Activated CD4-positive, alpha-beta memory T cell treated with anti-CD3 and anti-CD28 coated beads, Interleukin-2, amount 10 ng/mL, durations not matched to agents 7 days and 5 days (primary cell): ENCODE measurements at regions of chr12 and their contacts with region 1.

Region 1: DNA sequence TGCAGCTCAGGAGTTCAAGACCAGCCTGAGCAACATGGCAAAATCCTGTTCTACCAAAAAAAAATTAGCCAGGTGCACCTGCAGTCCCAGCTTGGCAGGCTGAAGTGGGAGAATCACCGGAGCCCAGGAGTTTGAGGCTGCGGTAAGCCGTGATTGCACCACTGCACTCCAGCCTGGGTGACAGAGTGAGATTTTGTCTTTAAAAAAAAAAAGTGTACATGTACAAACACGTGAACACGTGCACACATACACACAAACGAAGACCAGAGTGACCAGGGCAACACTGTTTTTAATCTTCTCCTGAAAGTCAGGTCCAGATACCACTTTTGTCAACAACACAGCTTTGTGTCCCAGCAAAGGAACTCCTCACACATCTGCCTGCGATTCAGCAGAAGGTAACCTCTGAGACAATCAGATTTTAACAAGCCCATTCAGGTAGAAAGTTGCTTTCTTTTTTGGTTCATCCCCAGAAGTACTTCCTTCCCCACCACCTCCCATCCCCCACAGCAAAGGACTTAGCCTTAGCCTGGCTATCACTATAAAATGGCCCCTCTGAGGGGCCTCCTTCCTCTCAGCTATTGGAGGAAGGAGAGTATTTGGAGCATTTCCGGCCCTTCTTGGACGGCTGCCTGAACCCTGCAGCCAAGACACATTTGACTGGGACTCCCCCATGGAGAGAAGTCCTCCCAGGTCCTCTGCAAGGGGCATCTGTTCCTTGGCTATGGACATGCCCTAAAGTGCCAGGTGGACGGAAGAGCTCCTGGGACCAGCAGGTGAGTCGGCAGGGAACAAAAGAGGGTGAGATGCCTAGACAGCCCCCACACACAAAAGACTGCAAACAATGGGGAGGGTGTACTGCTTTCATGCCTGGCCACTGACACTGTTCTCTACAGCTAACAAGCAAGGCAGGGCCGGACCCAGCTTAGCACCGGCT is 9.8 kb downstream of the CTDSP2 start:
- DNase-seq: peak; percentile 43
- H3K4me3 Mint-ChIP-seq: peak overlapping the region; percentile 21
- H3K27ac Mint-ChIP-seq: peak overlapping the region; percentile 79
- H3K4me1 Mint-ChIP-seq: peaks cover 86% of the 10 kb centered on the region
- H3K27me3 Mint-ChIP-seq: no peaks in the 10 kb centered on the region

Region 2: GRCh38 chr12:57816855-57817151 is 19.9 kb before region 1 on chr12:
- CTCF ChIA-PET with region 1: interaction called, 11 read pairs
- POLR2A ChIA-PET with region 1: no interaction called
- DNase-seq: no peak
- H3K4me3 Mint-ChIP-seq: no peak overlapping the region
- H3K27ac Mint-ChIP-seq: no peak overlapping the region
- H3K4me1 Mint-ChIP-seq: peaks cover 4% of the 10 kb centered on the region
- H3K27me3 Mint-ChIP-seq: no peaks in the 10 kb centered on the region

Region 3: DNA sequence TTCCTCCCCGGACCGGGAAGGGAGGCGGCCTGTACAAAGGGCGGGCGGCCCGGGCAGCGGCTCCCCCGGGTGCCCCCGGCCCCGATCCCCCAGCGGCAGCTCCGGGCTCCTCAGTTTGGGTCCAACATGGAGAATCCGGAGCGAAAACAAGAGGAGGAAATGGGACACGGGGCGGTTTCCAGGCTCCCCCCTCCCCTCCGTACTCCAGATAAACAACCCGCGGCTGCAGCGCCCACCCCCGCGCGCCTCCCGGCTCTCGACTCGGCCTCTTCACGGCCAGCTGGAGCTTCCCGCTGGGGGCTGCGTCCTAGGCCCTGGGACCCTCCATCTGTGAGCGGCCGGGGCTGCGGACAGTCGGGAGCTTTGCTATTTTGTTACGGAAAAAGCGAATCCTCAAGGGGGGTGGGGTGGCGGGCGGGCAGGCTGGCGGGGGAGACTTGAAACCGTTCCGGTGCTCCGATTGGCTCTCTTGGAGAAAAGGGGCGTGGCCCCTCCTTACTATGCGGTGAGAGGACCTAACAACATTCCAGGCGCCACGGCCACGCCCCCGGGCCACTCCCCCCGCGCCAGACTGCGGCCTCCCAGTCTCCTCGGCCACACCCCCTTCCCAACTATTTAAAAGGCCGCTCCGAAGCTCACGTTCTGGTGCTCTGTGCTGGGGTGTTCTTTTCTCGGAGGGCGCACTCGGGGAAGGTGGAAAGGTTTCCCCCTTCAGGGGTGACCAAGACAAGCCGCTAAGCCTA is 10.0 kb after region 1 on chr12 and contains the start of gene CTDSP2:
- CTCF ChIA-PET with region 1: interaction called, 23 read pairs
- POLR2A ChIA-PET with region 1: interaction called, 54 read pairs
- DNase-seq: peak; percentile 89
- H3K4me3 Mint-ChIP-seq: peak within 1 kb of the TSS; percentile 80
- H3K27ac Mint-ChIP-seq: peak within 1 kb of the TSS; percentile 64
- H3K4me1 Mint-ChIP-seq: peaks cover 33% of the 10 kb centered on the region
- H3K27me3 Mint-ChIP-seq: peaks cover 24% of the 10 kb centered on the region
- total RNA-seq, gene CTDSP2: 137 to 141 TPM

Region 4: DNA sequence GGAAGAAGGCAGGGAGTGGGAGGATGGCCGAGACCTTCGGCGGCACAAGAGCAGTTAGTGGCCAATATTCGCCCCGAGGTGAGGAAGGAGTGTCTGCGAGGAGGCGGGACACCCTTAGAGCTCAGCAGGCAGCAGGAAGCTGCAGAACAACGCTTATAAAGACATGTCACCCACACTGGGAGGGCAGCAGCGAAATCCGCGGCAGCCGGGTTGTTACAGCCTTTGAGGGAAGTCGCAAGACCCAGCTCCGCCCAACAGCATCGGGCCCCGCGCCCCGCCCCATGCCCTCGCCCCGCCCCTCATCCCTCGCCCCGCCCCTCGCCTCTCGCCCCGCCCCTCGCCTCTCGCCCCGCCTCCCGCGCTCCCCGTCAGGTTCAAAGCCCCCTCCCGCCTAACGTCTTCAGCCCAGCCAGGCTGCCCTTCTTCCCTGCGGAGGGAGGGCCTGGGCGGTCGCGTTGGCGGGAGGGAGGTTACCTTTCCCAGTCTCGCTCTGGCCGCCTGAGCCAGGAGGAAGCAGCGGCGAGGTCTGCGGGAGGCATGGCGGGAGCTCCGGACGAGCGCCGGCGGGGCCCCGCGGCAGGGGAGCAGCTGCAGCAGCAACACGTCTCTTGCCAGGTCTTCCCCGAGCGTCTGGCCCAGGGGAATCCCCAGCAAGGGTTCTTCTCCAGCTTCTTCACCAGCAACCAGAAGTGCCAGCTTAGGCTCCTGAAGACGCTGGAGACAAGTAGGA is 104.6 kb after region 1 on chr12 and contains the start of gene ATP23:
- CTCF ChIA-PET with region 1: no interaction called
- POLR2A ChIA-PET with region 1: interaction called, 14 read pairs
- DNase-seq: peak; percentile 93
- H3K4me3 Mint-ChIP-seq: peak within 1 kb of the TSS; percentile 84
- H3K27ac Mint-ChIP-seq: peak within 1 kb of the TSS; percentile 98
- H3K4me1 Mint-ChIP-seq: peaks cover 55% of the 10 kb centered on the region
- H3K27me3 Mint-ChIP-seq: no peaks in the 10 kb centered on the region
- total RNA-seq, gene ATP23: 17.1 to 18.7 TPM